ENCODE measurements at regions of chr12 and their contacts with region 1.

Region 1: DNA sequence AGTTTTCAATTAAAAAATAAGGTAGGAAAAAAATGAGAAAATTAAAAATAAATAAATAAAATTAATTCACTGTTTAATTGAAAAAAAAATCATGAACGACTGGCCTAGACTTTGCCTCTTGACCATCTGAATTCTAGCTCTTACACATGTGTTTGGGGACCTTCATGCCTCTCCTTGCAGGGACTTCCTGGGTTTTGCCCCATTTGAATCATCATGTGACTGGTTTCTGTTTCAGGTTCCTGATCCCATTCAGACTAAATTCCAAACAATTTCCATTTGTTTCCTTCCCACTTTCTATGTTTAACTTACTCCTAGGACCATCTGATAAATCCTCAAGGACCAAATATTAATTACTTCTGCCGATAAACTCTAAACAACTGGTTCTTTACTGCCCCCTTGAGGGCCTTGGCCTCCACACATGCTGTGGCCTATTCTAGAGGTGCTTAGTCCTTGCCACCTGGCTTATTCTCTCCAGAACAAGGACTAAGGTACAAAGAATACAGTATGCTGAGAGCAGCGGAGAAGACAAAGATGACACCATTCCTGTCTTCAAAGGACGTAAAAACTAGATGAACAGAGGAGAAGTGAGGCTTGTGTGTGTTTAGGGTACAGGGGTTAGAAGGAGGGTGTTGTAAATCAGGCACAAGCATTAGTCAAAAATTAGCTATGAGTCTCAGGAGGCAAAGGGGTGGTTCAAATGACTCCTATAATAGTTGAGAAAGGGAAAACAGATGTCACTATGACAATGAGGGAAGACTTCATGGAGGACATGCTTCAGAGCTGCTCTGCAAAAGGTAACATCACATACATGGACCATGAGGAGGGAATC is 125.8 kb upstream of the AVPR1A start:
- DNase-seq: peak; percentile 77
- ATAC-seq: peak; percentile 80
- H3K4me3 ChIP-seq: no peak overlapping the region
- H3K27ac ChIP-seq: no peak overlapping the region
- H3K4me1 ChIP-seq: no peaks in the 10 kb centered on the region
- H3K27me3 ChIP-seq: peaks cover 36% of the 10 kb centered on the region
- CTCF ChIP-seq: peak; percentile 94

Region 2: GRCh38 chr12:63151623-63152320 is 125.0 kb before region 1 on chr12:
- CTCF ChIA-PET with region 1: interaction called, 5 read pairs
- POLR2A ChIA-PET with region 1: no interaction called
- intact Hi-C with region 1: loop called (anchors 5 kb)
- DNase-seq: peak; percentile 57
- ATAC-seq: peak; percentile 94
- H3K4me3 ChIP-seq: peak overlapping the region; percentile 38; the same call in 1 of the 2 replicates
- H3K27ac ChIP-seq: no peak overlapping the region
- H3K4me1 ChIP-seq: 0 out of 2 replicates have a peak, but pooled peaks cover 5% of the 10 kb centered on the region
- H3K27me3 ChIP-seq: peaks cover 55% of the 10 kb centered on the region
- CTCF ChIP-seq: peak; percentile 88

Measured in PC-3 (cell line).